Gastrocnemius medialis (tissue), 4 donors: ENCODE measurements at regions of chr11 and their contacts with region 1.

Region 1: DNA sequence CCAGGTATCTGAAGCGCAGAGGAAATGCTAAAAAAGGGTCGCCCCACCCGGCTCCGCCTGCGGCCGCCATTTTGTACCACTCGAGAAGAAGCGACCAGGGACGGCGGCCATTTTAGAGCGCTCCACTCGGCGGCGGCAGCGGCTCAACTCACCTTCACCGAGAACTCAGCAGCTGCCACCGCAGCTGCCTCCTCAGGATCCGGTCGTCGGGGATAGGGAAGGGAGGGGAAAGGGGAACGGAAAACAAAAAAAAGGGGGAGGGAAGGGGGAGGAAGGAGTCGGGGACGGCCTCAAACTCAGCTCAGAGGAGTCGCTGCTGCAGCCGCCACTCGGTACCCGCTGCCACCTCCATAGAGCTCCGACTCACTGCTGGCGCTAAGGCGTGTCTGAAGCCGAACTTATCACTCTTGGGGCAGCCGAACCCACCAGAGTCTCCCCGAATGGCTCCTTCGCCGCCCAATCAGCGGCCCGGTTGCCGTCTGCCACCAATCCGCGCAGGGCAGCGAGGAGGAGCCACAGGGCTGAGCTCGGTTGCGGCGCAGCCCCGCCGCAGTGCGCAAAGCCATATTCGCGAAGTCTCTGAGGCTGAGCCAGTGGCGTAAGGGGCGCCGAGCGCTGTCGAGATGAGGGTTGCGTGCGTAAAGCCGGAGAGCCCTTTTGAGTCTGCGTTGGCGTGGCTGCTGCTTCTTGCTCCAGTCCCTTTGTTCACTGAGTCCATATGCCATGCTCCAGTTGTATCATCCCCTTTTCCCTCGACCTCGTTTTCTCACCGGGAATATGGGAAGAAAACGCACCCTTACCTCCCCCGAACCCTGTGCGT is at the start of gene EIF4G2:
- DNase-seq: peak; percentile 99
- ATAC-seq: peak; percentile 91 to 92
- H3K4me3 ChIP-seq: peak within 1 kb of the TSS; percentile 77 to 97 (median 91)
- H3K27ac ChIP-seq: peak within 1 kb of the TSS; percentile 94 to 99 (median 97)
- H3K4me1 ChIP-seq: peaks cover 29 to 34% of the 10 kb centered on the region in 2 donors
- H3K27me3 ChIP-seq: no peaks in the 10 kb centered on the region
- CTCF ChIP-seq: no peak
- POLR2A ChIP-seq: peak; percentile 99
- total RNA-seq, gene EIF4G2: 397 to 521 (median 465) TPM

Region 2: DNA sequence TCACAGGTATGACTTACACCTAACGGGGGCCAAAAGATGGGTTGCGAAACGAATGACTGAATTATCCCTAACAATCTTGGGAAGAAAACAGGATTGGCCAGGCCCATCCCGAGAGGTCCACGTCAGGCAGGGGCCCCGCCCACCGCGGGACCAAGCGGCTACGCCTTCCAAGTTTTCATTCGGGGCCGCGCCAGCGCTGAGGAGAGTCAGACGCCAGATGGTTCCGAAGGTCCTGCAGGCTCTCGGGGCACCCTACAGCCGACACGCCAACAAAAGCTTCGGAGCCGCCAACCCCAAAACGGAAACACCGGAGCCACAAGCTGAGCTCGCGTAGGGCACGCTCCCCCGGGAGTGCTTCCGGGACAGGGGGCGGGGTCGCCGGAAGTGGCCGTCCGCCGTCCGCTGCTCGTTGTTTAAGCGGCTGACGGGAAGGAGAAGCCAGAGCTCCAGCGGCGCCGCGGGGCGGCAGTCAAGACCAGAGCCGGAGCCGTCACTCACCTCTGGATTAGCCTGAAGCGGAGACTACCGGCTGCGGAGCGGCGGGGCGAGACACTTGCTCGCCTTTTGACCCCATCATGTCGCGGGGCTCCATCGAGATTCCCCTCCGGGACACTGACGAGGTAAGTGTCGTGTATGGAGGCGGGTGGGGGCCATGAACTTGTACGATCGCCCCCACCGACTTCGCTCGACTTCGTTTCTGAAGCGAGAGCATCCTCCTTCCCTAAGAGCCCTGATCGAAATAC is 57.8 kb before region 1 on chr11 and contains the start of gene CTR9:
- in situ Hi-C with region 1: loop called in 1 of 4 experiments (anchors 5 kb)
- intact Hi-C with region 1: loop called (anchors 5 kb)
- DNase-seq: peak; percentile 90 to 93
- ATAC-seq: peak; percentile 92 to 93
- H3K4me3 ChIP-seq: peak within 1 kb of the TSS; percentile 65 to 96 (median 90)
- H3K27ac ChIP-seq: peak within 1 kb of the TSS; percentile 86 to 98 (median 97)
- H3K4me1 ChIP-seq: peaks cover 10 to 26% of the 10 kb centered on the region in 2 donors
- H3K27me3 ChIP-seq: no peaks in the 10 kb centered on the region
- CTCF ChIP-seq: peak in 1 of 5 experiments; percentile 25
- POLR2A ChIP-seq: peak; percentile 93 to 97
- total RNA-seq, gene CTR9: 18.3 to 22.2 (median 20.4) TPM

Region 3: GRCh38 chr11:10824888-10825287 is 16.1 kb after region 1 on chr11:
- in situ Hi-C with region 1: no loop called
- intact Hi-C with region 1: no loop called
- DNase-seq: no peak
- ATAC-seq: no peak
- H3K4me3 ChIP-seq: no peak overlapping the region
- H3K27ac ChIP-seq: no peak overlapping the region
- H3K4me1 ChIP-seq: no peaks in the 10 kb centered on the region
- H3K27me3 ChIP-seq: no peaks in the 10 kb centered on the region
- CTCF ChIP-seq: no peak
- POLR2A ChIP-seq: no peak

Region 4: GRCh38 chr11:10857709-10858438 is 49.1 kb after region 1 on chr11 and contains the start of gene ZBED5:
- in situ Hi-C with region 1: loop called in 2 of 4 experiments (anchors 5 to 10 kb)
- intact Hi-C with region 1: loop called (anchors 1 kb)
- DNase-seq: peak; percentile 97 to 98
- ATAC-seq: peak; percentile 87 to 92
- H3K4me3 ChIP-seq: peak within 1 kb of the TSS; percentile 89 to 97 (median 94)
- H3K27ac ChIP-seq: peak within 1 kb of the TSS; percentile 95 to 99 (median 98)
- H3K4me1 ChIP-seq: peaks cover 31 to 36% of the 10 kb centered on the region in 2 donors
- H3K27me3 ChIP-seq: no peaks in the 10 kb centered on the region
- CTCF ChIP-seq: peak in 2 of 5 experiments; percentile 6 to 43
- POLR2A ChIP-seq: peak; percentile 98 to 99
- total RNA-seq, gene ZBED5: 11.3 to 36.3 (median 18.5) TPM

Region 5: DNA sequence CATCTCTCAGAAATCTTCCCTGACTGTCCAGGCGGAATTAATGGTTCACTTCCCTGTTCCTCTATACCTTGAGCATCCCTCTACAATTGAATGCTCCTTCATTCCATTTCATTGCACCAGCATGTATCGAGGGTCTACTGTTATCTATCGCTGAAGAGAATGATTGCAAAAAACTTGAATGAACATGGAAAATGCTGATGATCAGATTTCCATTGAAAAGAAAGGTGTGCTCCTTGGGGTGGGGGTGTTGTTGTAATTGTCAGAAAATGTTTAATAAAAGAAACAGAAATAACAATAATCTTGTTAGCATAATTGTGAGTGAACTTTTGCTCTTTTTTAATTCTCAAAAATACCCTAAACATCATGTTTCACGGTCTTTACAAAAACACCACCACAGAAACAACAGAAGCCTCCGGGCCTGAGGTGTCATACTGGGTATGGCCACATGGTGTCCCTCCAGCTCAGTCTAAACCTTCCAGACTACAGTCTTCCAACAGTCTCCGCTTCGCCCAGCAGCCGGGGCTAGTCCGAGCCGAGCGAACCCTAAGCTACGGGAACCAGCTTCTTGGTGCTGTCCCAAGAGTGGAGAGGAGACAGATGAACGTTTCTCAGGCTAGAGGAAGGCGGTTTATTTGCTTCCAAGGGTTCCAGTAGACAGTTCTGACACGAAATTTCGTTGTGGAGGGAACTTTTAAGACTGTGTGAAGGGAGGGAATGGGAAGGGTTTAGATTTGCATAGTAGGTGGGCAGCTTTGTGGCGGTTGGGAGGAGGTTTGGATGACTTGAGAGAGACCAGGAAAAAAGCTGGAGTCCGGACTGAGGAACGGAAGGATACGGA is 124.9 kb after region 1 on chr11:
- in situ Hi-C with region 1: no loop called
- intact Hi-C with region 1: loop called (anchors 5 kb)
- DNase-seq: peak; percentile 80 to 85
- ATAC-seq: peak; percentile 78 to 84
- H3K4me3 ChIP-seq: peak overlapping the region; percentile 45 to 65 (median 54)
- H3K27ac ChIP-seq: peak overlapping the region; percentile 64 to 84 (median 67)
- H3K4me1 ChIP-seq: peaks cover 6 to 7% of the 10 kb centered on the region in 2 donors
- H3K27me3 ChIP-seq: no peaks in the 10 kb centered on the region
- CTCF ChIP-seq: peak; percentile 92 to 98 (median 94)
- POLR2A ChIP-seq: no peak

Region 6: DNA sequence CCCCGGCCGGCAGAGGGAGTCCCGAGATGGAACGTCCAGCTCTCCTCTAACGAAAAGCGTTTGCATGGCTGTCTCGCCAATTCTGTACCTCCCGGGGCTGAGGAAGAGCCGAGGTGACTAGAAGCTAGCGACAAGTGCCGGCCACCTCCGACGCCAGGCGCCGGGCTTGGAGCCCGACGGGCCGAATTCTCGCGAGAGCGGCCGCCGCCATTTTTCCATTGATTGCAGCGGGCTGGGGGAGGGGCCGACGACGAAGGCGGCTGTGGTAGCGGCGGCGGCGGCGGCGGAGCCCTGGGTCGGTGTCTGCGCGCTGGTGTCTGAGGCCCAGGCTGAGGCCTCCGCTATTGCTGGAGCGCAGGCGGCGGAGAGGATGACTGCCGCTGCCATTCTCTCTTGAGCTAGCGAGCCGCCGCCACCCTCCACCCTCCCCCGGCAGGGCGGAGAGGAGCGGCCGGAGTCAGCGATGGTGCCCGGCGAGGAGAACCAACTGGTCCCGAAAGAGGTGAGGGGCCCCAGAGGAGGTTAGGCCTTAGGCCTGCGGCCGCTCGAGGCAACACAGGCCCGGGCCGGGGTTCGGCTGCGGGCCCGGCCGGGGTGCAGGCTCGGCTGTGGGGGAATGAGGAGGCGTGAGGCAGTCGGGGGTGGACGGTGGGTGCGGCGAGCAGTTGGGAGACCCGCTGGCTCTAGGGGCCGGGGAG is 1033.1 kb after region 1 on chr11 and contains the start of gene USP47:
- in situ Hi-C with region 1: no loop called
- intact Hi-C with region 1: loop called (anchors 2 kb)
- DNase-seq: peak; percentile 78 to 89
- ATAC-seq: peak; percentile 68 to 74
- H3K4me3 ChIP-seq: peak within 1 kb of the TSS; percentile 93 to 99 (median 96)
- H3K27ac ChIP-seq: peak within 1 kb of the TSS; percentile 99 to 100 (median 99)
- H3K4me1 ChIP-seq: peaks cover 34 to 36% of the 10 kb centered on the region in 2 donors
- H3K27me3 ChIP-seq: no peaks in the 10 kb centered on the region
- CTCF ChIP-seq: peak; percentile 54 to 83 (median 73)
- POLR2A ChIP-seq: peak; percentile 88 to 91
- total RNA-seq, gene USP47: 84.4 to 222 (median 97.6) TPM